Activated CD4-positive, alpha-beta T cell treated with anti-CD3 and anti-CD28 coated beads, Interleukin-2, amount 10 ng/mL, durations not matched to agents 7 days and 5 days (primary cell): ENCODE measurements at regions of chr20 and their contacts with region 1.

Region 1: GRCh38 chr20:45436732-45437391 is 20.9 kb downstream of the PIGT start:
- DNase-seq: peak; percentile 87
- H3K4me3 Mint-ChIP-seq: peak overlapping the region; percentile 72
- H3K27ac Mint-ChIP-seq: peak overlapping the region; percentile 33
- H3K4me1 Mint-ChIP-seq: peaks cover 21% of the 10 kb centered on the region
- H3K27me3 Mint-ChIP-seq: no peaks in the 10 kb centered on the region

Region 2: GRCh38 chr20:45293041-45294002 is 143.5 kb before region 1 on chr20:
- CTCF ChIA-PET with region 1: interaction called, 12 read pairs
- POLR2A ChIA-PET with region 1: no interaction called
- DNase-seq: peak; percentile 81
- H3K4me3 Mint-ChIP-seq: peak overlapping the region; percentile 62
- H3K27ac Mint-ChIP-seq: no peak overlapping the region
- H3K4me1 Mint-ChIP-seq: peaks cover 13% of the 10 kb centered on the region
- H3K27me3 Mint-ChIP-seq: peaks cover 36% of the 10 kb centered on the region

Region 3: GRCh38 chr20:45322952-45323383 is 113.9 kb before region 1 on chr20:
- CTCF ChIA-PET with region 1: interaction called, 10 read pairs
- POLR2A ChIA-PET with region 1: no interaction called
- DNase-seq: no peak
- H3K4me3 Mint-ChIP-seq: no peak overlapping the region
- H3K27ac Mint-ChIP-seq: no peak overlapping the region
- H3K4me1 Mint-ChIP-seq: peaks cover 32% of the 10 kb centered on the region
- H3K27me3 Mint-ChIP-seq: no peaks in the 10 kb centered on the region

Region 4: DNA sequence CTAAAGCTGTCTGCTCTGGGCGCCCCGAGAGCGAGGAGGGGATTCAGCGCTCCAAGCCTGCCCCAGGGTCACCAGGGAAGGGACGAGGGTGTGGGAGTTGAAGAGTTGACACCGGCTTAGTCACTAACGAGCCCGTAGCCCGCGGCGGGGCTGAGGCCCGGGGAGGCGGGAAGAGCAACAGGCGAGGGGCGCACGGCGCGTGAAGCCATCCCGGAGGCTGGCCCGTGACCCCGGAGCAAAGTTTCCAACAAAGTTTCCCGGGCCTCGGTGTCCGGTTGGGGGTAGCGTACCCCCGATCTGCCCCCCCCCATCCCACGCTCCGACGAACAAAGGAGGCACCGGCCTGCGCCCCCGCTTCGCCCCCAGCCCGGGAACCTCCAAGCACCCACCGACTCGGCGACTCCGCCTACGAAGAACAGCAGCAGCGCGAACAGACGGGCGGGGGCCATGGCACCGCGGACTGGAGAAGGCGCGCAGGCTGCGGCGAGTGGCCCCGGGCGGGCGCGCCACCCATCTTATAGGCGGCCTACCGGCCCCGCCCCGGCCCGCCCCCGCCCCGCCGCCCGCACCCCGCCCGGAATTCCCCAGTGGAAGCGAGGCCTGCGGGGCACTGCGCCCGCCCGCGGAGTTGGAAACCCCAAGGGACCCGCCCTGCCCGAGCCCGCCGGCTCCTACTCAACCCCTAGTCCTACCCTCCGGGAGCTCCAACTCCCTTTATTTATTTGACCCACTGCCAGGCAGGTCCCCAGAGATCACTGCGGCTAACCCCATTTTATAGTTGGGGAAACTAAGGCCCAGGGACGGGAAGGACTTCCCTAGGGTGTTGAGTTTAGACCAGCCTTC is 88.7 kb before region 1 on chr20 and contains the start of gene SDC4:
- CTCF ChIA-PET with region 1: interaction called, 11 read pairs
- POLR2A ChIA-PET with region 1: no interaction called
- DNase-seq: peak; percentile 58
- H3K4me3 Mint-ChIP-seq: peak within 1 kb of the TSS; percentile 72
- H3K27ac Mint-ChIP-seq: peak within 1 kb of the TSS; percentile 76
- H3K4me1 Mint-ChIP-seq: peaks cover 30% of the 10 kb centered on the region
- H3K27me3 Mint-ChIP-seq: no peaks in the 10 kb centered on the region
- total RNA-seq, gene SDC4: 7.5 to 8.1 TPM

Region 5: GRCh38 chr20:45355209-45356084 is 81.4 kb before region 1 on chr20:
- CTCF ChIA-PET with region 1: interaction called, 13 read pairs
- POLR2A ChIA-PET with region 1: no interaction called
- DNase-seq: no peak
- H3K4me3 Mint-ChIP-seq: no peak overlapping the region
- H3K27ac Mint-ChIP-seq: peak overlapping the region; percentile 76
- H3K4me1 Mint-ChIP-seq: peaks cover 56% of the 10 kb centered on the region
- H3K27me3 Mint-ChIP-seq: no peaks in the 10 kb centered on the region

Region 6: GRCh38 chr20:45362804-45363610 is 73.9 kb before region 1 on chr20 and contains the start of gene SYS1:
- CTCF ChIA-PET with region 1: interaction called, 36 read pairs
- POLR2A ChIA-PET with region 1: interaction called, 5 read pairs
- DNase-seq: peak; percentile 99
- H3K4me3 Mint-ChIP-seq: peak within 1 kb of the TSS; percentile 92
- H3K27ac Mint-ChIP-seq: peak within 1 kb of the TSS; percentile 92
- H3K4me1 Mint-ChIP-seq: peaks cover 59% of the 10 kb centered on the region
- H3K27me3 Mint-ChIP-seq: no peaks in the 10 kb centered on the region
- total RNA-seq, gene SYS1: 23.9 to 25.6 TPM

Region 7: DNA sequence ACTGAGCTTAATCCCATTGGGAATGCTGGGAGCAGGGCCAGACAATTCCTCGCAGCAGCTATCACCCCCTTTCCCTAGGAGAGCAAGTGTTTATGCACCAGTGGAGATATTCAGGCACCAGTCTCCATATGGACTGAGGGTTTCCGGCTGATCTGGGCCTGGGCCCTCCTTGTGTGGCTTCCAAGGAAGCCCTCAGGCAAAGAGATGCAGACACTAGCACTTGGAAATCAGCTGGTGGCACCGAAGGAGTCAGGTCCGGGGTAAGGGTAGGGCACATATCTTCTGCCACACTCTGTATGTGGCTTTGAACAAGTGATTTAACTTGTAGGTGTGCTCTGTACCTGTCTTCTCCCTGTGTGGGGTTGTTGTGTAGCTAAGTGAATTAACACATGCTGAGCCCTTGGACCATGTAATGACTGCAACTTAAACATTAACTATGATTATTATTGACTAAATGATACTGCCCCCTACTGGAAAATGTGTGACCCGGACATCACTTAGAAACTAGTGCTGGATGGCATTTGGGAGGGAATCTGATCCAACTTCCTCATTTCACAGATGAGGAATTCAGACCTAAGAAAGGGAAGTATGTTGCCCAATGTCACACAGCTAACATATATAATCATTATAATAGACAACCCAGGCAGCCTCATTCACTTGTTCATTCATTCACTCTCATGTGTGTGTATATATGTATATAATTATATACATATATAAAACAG is 13.4 kb after region 1 on chr20:
- CTCF ChIA-PET with region 1: interaction called, 15 read pairs
- POLR2A ChIA-PET with region 1: no interaction called
- DNase-seq: peak; percentile 42
- H3K4me3 Mint-ChIP-seq: no peak overlapping the region
- H3K27ac Mint-ChIP-seq: no peak overlapping the region
- H3K4me1 Mint-ChIP-seq: peaks cover 14% of the 10 kb centered on the region
- H3K27me3 Mint-ChIP-seq: peaks cover 18% of the 10 kb centered on the region

Region 8: DNA sequence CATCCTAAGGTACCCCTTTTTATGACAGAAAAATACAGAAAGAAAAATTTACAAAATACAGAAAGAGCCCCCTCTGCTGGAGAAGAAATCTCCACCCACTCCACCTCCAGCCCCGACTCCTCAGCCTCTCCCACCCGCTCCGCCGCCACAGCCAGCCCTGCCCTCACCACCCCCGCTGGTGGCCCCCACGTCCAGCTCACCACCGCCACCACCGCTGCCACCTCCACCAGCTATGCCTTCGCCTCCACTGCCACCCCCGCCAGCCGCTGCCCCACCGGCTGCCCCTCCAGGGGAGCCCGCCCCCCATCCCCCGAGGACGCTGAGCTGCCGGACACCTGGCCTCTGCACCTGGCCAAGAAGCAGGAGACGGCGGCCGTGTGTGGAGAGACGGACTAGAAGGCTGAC is 50.4 kb after region 1 on chr20:
- CTCF ChIA-PET with region 1: no interaction called
- POLR2A ChIA-PET with region 1: no interaction called
- DNase-seq: no peak
- H3K4me3 Mint-ChIP-seq: no peak overlapping the region
- H3K27ac Mint-ChIP-seq: no peak overlapping the region
- H3K4me1 Mint-ChIP-seq: no peaks in the 10 kb centered on the region
- H3K27me3 Mint-ChIP-seq: peaks cover 36% of the 10 kb centered on the region